Sciatic nerve (tissue), 2 donors: ENCODE measurements at regions of chrX and their contacts with region 1.

Region 1: GRCh38 chrX:38699696-38700095 is 101.6 kb upstream of the MID1IP1 start:
- DNase-seq: no peak
- ATAC-seq: peak; percentile 75

Region 2: GRCh38 chrX:39453889-39454621 is 754.4 kb after region 1 on chrX:
- intact Hi-C with region 1: loop called (anchors 5 kb)
- DNase-seq: no peak
- ATAC-seq: peak; percentile 67